CD4-positive, alpha-beta T cell (primary cell): ENCODE measurements at regions of chr17 and their contacts with region 1.

Region 1: GRCh38 chr17:43940630-43941029 is 1.6 kb downstream of the PPY start:
- DNase-seq: peak in 2 of 14 experiments; percentile 29 to 39
- ATAC-seq: no peak
- H3K4me3 ChIP-seq: no peak overlapping the region
- H3K4me3 Mint-ChIP-seq: no peak overlapping the region
- H3K27ac ChIP-seq: no peak overlapping the region
- H3K27ac Mint-ChIP-seq: no peak overlapping the region
- H3K4me1 ChIP-seq: peaks cover 20% of the 10 kb centered on the region
- H3K4me1 Mint-ChIP-seq: peaks cover 18% of the 10 kb centered on the region
- H3K27me3 ChIP-seq: no peaks in the 10 kb centered on the region
- H3K27me3 Mint-ChIP-seq: peaks cover 24% of the 10 kb centered on the region
- CTCF ChIP-seq: no peak

Region 2: GRCh38 chr17:43846221-43846712 is 94.4 kb before region 1 on chr17:
- CTCF ChIA-PET with region 1: no interaction called
- POLR2A ChIA-PET with region 1: no interaction called
- intact Hi-C with region 1: no loop called
- DNase-seq: peak; percentile 59 to 83 (median 72)
- ATAC-seq: peak; percentile 100
- H3K4me3 ChIP-seq: no peak overlapping the region
- H3K4me3 Mint-ChIP-seq: no peak overlapping the region
- H3K27ac ChIP-seq: no peak overlapping the region
- H3K27ac Mint-ChIP-seq: no peak overlapping the region
- H3K4me1 ChIP-seq: no peaks in the 10 kb centered on the region
- H3K4me1 Mint-ChIP-seq: no peaks in the 10 kb centered on the region
- H3K27me3 ChIP-seq: peaks cover 3 to 7% of the 10 kb centered on the region in 2 experiments
- H3K27me3 Mint-ChIP-seq: peaks cover 40% of the 10 kb centered on the region
- CTCF ChIP-seq: peak; percentile 92

Region 3: GRCh38 chr17:43911904-43912303 is 28.7 kb before region 1 on chr17:
- CTCF ChIA-PET with region 1: interaction called, 9 read pairs
- POLR2A ChIA-PET with region 1: interaction called, 3 read pairs
- intact Hi-C with region 1: loop called in 1 of 2 experiments (anchors 2 kb)
- DNase-seq: no peak
- ATAC-seq: no peak
- H3K4me3 ChIP-seq: no peak overlapping the region
- H3K4me3 Mint-ChIP-seq: no peak overlapping the region
- H3K27ac ChIP-seq: no peak overlapping the region
- H3K27ac Mint-ChIP-seq: no peak overlapping the region
- H3K4me1 ChIP-seq: peaks cover 19% of the 10 kb centered on the region
- H3K4me1 Mint-ChIP-seq: peaks cover 20% of the 10 kb centered on the region
- H3K27me3 ChIP-seq: peaks cover 0 to 10% of the 10 kb centered on the region in 2 experiments
- H3K27me3 Mint-ChIP-seq: peaks cover 14% of the 10 kb centered on the region
- CTCF ChIP-seq: no peak

Region 4: DNA sequence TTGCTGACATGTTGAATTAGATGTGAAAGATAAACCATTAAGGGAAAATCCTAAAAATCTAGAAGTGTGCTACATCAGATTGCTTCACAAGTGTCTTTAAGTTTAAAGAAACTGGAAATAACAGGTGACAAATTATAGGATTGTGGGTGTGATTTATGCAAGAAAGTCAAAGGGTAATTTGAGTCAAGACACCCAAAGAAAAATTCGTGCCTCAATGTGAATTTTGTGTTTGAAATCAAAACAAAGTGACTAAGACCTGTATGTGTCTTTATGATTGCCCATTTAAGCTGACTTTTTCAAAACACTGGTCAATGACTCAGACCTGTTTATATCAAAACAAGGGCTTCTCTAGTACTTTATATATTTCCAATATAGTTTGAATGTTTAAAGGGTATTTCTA is 18.3 kb after region 1 on chr17:
- CTCF ChIA-PET with region 1: interaction called, 11 read pairs
- POLR2A ChIA-PET with region 1: no interaction called
- intact Hi-C with region 1: no loop called
- DNase-seq: no peak
- ATAC-seq: no peak
- H3K4me3 ChIP-seq: no peak overlapping the region
- H3K4me3 Mint-ChIP-seq: no peak overlapping the region
- H3K27ac ChIP-seq: no peak overlapping the region
- H3K27ac Mint-ChIP-seq: no peak overlapping the region
- H3K4me1 ChIP-seq: no peaks in the 10 kb centered on the region
- H3K4me1 Mint-ChIP-seq: no peaks in the 10 kb centered on the region
- H3K27me3 ChIP-seq: peaks cover 17 to 19% of the 10 kb centered on the region in 2 experiments
- H3K27me3 Mint-ChIP-seq: peaks cover 30% of the 10 kb centered on the region
- CTCF ChIP-seq: no peak

Region 5: GRCh38 chr17:43994272-43995149 is 53.9 kb after region 1 on chr17:
- CTCF ChIA-PET with region 1: interaction called, 3 read pairs
- POLR2A ChIA-PET with region 1: no interaction called
- intact Hi-C with region 1: loop called (anchors 1 to 2 kb)
- DNase-seq: peak; percentile 50 to 82 (median 61)
- ATAC-seq: peak; percentile 92
- H3K4me3 ChIP-seq: peak overlapping the region; percentile 33
- H3K4me3 Mint-ChIP-seq: no peak overlapping the region
- H3K27ac ChIP-seq: no peak overlapping the region
- H3K27ac Mint-ChIP-seq: no peak overlapping the region
- H3K4me1 ChIP-seq: peaks cover 10% of the 10 kb centered on the region
- H3K4me1 Mint-ChIP-seq: no peaks in the 10 kb centered on the region
- H3K27me3 ChIP-seq: peaks cover 9 to 13% of the 10 kb centered on the region in 2 experiments
- H3K27me3 Mint-ChIP-seq: peaks cover 33% of the 10 kb centered on the region
- CTCF ChIP-seq: peak; percentile 77

Region 6: DNA sequence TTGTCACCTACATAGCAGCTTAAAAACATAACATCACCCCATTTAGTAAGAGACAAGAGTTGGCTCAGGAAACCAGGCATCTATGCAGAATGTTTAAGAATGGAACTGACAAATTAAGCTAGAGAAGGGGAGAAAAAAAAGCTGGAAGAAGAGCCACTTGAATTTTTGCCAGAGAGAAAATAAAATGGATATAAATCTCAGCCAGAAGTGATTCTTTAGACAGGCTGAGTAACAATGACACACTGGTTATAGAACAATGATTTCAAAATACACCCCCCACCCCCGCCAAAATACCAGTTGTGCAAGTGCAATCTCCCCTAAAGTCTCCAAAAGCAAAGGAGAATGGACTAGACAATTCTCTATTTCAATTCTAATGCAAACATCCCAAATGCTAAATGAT is 103.4 kb after region 1 on chr17:
- CTCF ChIA-PET with region 1: interaction called, 18 read pairs
- POLR2A ChIA-PET with region 1: interaction called, 5 read pairs
- intact Hi-C with region 1: loop called (anchors 1 kb)
- DNase-seq: no peak
- ATAC-seq: no peak
- H3K4me3 ChIP-seq: no peak overlapping the region
- H3K4me3 Mint-ChIP-seq: no peak overlapping the region
- H3K27ac ChIP-seq: no peak overlapping the region
- H3K27ac Mint-ChIP-seq: no peak overlapping the region
- H3K4me1 ChIP-seq: peaks cover 6% of the 10 kb centered on the region
- H3K4me1 Mint-ChIP-seq: peaks cover 13% of the 10 kb centered on the region
- H3K27me3 ChIP-seq: no peaks in the 10 kb centered on the region
- H3K27me3 Mint-ChIP-seq: no peaks in the 10 kb centered on the region
- CTCF ChIP-seq: no peak

Region 7: GRCh38 chr17:44174427-44174826 is 233.8 kb after region 1 on chr17:
- CTCF ChIA-PET with region 1: no interaction called
- POLR2A ChIA-PET with region 1: no interaction called
- intact Hi-C with region 1: loop called in 1 of 2 experiments (anchors 2 kb)
- DNase-seq: no peak
- ATAC-seq: no peak
- H3K4me3 ChIP-seq: no peak overlapping the region
- H3K4me3 Mint-ChIP-seq: no peak overlapping the region
- H3K27ac ChIP-seq: no peak overlapping the region
- H3K27ac Mint-ChIP-seq: no peak overlapping the region
- H3K4me1 ChIP-seq: no peaks in the 10 kb centered on the region
- H3K4me1 Mint-ChIP-seq: no peaks in the 10 kb centered on the region
- H3K27me3 ChIP-seq: no peaks in the 10 kb centered on the region
- H3K27me3 Mint-ChIP-seq: no peaks in the 10 kb centered on the region
- CTCF ChIP-seq: no peak

Region 8: DNA sequence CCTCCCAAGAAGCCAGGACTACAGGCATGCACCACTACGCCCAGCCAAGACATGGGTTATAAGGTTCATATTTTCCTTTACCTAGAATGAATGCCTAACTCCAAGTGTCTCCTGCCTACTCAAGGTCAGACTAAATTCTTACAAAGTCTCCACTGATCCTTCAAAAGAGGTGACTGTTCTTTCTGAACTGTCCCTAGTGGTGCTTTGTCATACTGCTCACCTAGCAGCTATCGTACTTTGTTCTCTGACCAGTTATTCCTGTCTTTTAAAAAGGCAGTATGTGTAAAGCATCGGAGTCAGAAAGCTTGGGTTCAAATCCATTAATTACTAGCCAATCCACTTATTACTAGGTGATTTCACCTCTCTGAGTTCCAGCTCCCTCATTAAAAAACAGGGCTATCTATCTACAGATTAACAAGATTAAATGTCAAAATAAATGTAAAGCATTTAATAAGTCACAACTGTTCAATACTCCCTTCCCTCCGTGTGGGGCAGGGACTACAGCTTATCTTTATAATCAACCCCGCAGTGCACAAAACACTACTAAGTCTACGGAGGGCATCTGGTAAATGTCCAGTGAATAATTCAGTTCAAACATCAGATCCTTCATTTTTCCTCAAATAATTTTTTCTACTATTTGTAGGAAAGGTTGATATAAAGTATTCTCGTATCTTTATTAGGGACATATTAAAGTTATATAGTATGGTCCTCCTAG is 468.8 kb after region 1 on chr17:
- CTCF ChIA-PET with region 1: no interaction called
- POLR2A ChIA-PET with region 1: no interaction called
- intact Hi-C with region 1: no loop called
- DNase-seq: no peak
- ATAC-seq: no peak
- H3K4me3 ChIP-seq: no peak overlapping the region
- H3K4me3 Mint-ChIP-seq: no peak overlapping the region
- H3K27ac ChIP-seq: no peak overlapping the region
- H3K27ac Mint-ChIP-seq: no peak overlapping the region
- H3K4me1 ChIP-seq: no peaks in the 10 kb centered on the region
- H3K4me1 Mint-ChIP-seq: no peaks in the 10 kb centered on the region
- H3K27me3 ChIP-seq: no peaks in the 10 kb centered on the region
- H3K27me3 Mint-ChIP-seq: no peaks in the 10 kb centered on the region
- CTCF ChIP-seq: no peak